ENCODE measurements at regions of chr10 and their contacts with region 1.

Region 1: DNA sequence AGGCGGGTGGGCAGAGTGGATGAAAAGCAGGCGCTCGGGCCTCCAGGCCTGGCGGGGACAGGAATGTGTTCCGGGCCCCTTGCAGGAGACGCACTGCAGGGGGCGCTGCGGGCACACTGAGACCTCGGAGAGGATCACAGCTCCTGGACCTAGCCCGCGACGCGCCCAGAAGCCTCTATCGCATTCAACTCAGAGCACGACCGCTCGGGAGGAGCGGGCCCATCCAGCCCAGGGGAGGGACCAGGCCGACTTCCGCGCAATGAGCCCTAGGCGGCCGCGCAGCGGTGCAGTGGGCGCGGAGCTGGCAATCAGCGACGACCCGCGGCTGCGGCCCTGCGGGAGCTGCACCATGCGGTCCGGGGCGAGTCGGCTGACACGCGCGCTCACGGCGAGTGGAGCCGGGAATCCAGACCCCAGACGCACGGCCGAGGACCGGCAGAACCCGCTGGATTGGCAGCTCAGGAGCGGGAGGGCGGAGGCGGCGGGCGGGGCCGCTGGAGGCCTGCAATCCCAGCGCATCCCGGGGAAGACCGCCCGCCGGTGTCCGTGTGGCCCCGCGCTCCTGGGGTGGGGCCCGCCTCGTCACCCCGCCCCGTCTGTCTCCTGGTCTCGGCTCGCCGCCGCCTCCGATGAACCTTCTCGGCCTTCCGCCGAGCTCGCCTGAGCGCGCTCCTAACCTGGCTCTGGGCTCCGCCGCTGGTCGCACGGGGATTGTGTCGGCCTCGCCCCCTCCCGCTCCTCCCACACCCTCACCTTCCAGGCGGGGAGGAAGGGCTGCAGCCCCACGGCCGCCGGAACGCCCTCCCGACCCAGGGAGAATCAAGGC is 33.5 kb upstream of the GRID1 start:
- ATAC-seq: peak; percentile 92 to 97 (median 96)
- H3K4me3 ChIP-seq: peak overlapping the region; percentile 37 to 50 (median 47)
- H3K27ac ChIP-seq: peak overlapping the region; percentile 63 to 65
- H3K4me1 ChIP-seq: peaks cover 0 to 10% of the 10 kb centered on the region in 2 donors

Region 2: DNA sequence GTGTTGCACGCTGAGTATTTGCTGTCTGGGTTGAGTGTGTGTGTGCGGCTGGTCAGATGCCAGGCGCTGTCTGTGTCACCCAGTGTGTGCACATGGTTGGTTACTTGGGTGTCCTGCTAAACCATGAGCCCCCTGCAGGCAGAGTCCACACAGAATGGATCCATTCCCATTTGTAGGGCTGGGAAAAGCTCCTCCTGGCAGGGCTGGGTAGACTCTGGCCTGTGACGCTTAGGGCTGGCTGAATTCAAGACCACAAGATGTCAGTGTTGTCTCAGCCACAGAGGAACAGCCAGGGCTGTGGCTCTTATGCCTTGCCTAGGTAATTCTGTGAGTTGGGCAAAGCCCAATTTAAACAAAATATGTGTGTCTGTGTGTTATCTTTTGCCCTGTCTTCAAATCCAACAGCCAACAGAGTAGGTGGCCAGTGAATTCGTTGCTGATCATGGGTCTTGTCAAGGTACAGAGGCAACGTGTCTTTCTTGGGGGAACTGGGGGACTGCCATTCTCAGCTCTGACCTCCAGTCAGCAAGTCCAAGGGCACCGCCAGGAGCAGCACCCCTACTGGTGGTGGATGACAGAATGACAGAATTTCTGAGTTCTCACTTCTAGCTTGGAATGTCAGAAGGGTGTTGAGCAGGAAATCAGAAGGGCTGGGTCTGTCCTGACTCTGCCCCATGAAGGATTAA is 1786.6 kb before region 1 on chr10:
- in situ Hi-C with region 1: loop called in 2 of 9 experiments (anchors 25 kb)
- ATAC-seq: peak; percentile 94 to 100 (median 99)
- H3K4me3 ChIP-seq: no peak overlapping the region
- H3K27ac ChIP-seq: no peak overlapping the region
- H3K4me1 ChIP-seq: no peaks in the 10 kb centered on the region

Region 3: DNA sequence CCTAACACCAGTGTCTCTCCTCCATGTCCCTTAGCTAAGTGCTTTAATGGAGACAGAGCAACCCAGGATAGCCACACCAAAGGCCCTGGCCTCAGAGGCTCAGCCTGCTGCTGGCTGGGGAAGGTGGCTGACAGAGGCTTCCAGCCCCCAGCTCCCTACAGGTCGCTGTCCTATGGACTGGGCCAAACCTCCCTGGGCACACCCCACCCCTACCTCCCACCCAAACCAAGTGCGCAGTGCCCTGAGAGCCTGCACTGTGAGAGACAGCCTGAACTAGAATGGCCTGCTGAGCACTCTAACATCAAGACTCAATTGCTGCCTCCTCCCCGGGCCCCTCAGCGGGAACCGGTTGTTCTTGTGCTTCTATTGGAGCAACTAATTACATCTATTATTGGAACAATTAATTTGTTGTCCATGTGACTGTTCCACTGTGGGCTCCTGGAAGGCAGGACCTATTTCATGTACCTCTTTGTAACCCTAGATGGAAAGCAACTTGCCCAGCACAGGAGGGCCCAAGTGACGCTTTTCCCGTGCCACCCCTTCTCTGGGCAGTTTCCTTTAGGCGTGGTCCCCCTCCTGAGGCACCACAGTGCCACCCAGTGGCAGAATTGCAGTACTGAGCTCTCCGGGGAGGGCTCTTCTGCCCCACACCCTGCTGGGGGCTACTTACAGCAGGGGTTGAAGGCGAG is 185.1 kb after region 1 on chr10:
- in situ Hi-C with region 1: loop called in 4 of 9 experiments (anchors 10 to 25 kb)
- ATAC-seq: peak; percentile 84 to 99 (median 92)
- H3K4me3 ChIP-seq: no peak overlapping the region
- H3K27ac ChIP-seq: no peak overlapping the region
- H3K4me1 ChIP-seq: no peaks in the 10 kb centered on the region

Measured in motor neuron (in vitro differentiated cells).